ENCODE measurements at regions of chr7 and their contacts with region 1.

Region 1: DNA sequence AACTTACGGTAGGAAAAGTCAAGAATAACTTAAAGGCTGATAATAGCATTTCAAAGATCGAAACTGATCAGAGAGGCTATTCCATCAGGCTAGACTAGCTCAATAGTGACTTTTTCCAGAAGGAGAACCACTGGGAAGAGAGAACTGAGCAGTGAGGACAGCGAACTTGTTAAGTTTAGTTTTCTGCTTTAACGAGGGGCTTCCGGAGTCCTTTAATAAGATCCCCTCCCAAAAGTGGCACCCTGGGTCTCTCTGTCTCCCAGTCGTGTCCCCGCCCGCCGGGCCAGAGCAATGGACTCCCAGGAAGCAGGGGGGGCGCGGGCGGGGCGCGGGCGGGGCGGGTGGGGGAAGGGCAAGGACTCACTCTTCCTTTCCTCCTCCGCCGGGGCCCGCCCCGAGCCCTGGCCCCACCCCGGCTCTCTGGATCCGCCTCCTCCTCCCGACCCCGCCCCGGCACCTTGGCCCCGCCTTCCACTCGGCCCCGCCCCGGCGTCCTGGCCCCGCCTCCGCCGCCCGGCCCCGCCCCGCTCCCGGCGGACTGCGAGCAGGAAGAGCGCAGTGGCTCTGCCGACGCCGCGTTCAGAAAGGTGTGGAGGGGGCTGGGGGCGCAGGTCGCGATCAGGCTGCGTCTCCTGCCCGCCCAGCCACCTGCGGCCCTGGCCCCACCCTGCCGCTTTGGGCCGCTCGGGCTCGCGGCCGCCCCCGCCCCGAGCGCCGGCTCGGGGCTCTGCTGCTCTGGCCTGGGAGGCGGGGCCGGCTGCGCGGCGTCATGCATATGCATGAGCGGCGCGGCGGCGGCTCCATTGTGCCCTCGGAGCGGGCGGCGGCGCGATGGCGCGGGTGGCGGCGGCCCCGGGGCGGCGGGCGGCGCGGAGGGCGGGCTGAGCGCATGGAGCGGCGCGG is at the start of gene ZMIZ2:
- H3K4me3 Mint-ChIP-seq: peak within 1 kb of the TSS; percentile 91
- H3K27ac Mint-ChIP-seq: peak within 1 kb of the TSS; percentile 85
- H3K4me1 Mint-ChIP-seq: peaks cover 61% of the 10 kb centered on the region
- H3K27me3 Mint-ChIP-seq: no peaks in the 10 kb centered on the region

Region 2: GRCh38 chr7:44309471-44310049 is 438.7 kb before region 1 on chr7:
- intact Hi-C with region 1: no loop called
- H3K4me3 Mint-ChIP-seq: peak overlapping the region; percentile 32
- H3K27ac Mint-ChIP-seq: no peak overlapping the region
- H3K4me1 Mint-ChIP-seq: no peaks in the 10 kb centered on the region
- H3K27me3 Mint-ChIP-seq: peaks cover 54% of the 10 kb centered on the region

Region 3: DNA sequence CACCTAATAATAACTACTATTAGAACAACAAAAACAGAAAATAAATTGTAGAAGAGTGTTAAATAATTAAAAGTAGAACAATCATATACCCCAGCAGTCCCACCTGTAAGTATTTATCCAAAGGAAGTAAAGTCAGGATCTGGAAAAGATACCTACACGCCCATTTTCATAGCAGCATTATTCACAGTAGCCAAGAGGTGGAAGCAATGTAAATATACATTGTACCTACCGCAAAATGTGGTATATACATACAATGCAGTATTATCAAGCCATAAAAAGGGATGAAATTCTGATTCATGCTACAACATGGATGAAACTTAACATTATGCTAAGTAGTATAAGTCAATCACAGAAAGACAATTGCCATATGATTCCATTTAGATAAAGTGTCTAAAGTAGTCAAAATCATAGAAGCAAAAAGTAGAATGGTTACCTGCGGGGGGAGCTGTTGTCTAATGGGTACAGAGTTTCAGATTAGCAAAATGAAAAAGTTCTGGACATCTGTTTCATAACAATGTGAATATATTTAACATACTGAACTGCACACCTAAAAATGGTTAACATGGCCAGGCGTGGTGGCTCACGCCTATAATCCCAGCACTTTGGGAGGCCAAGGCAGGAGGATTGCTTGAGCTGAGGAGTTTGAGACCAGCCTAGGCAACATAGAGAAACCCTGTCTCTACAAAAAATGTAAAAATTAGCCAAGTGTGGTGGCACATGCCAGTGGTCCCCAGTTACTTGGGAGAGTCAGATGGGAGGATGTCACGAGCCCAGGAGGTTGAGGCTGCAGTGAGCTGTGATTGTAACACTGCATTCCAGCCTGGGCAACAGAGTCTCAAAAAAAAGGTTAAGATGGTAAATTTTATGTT is 160.2 kb before region 1 on chr7:
- intact Hi-C with region 1: loop called (anchors 5 kb)
- H3K4me3 Mint-ChIP-seq: no peak overlapping the region
- H3K27ac Mint-ChIP-seq: no peak overlapping the region
- H3K4me1 Mint-ChIP-seq: peaks cover 2% of the 10 kb centered on the region
- H3K27me3 Mint-ChIP-seq: peaks cover 8% of the 10 kb centered on the region

Region 4: DNA sequence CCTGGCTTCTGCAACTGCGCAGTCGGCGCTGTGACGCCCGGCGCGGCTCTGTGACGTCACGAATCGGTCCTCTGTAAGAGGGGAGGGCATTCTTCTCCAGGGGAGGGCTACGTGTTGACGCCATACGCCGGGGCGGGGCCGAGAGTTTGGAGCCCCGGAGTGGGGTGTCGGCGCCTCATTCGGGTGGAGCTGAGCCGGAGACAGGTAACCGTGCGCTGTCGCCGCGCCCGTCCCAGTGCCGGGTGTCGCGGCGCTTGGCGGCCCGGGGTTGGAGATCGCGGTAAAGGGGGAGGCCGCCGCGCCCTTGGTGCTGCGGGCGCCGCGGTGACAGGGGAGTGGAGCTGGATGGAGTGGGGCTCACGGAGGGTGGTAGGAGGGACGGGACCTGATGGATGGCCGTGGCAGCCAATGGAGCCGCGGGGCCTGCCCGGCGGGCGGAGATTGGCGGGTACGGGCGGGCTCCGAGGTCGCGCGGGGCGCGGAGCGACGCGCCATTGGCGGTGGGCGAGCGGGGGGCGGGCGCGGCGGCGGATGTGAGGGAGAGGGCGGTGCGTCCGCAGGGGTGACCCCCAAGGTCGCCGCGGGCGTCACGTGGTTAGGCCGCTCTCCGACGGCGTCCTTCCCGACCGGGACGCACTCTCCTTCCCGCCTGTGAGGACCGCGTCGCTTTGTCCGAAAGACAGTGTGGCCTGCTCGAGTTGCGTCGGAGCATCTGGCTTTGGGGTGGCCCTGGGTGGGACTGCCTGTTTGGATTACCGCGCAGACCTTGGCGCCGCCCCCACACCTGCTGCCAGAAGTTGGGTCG is 141.6 kb before region 1 on chr7 and contains the start of gene OGDH:
- intact Hi-C with region 1: loop called (anchors 2 kb)
- H3K4me3 Mint-ChIP-seq: peak within 1 kb of the TSS; percentile 94
- H3K27ac Mint-ChIP-seq: peak within 1 kb of the TSS; percentile 98
- H3K4me1 Mint-ChIP-seq: peaks cover 53% of the 10 kb centered on the region
- H3K27me3 Mint-ChIP-seq: peaks cover 11% of the 10 kb centered on the region

Region 5: DNA sequence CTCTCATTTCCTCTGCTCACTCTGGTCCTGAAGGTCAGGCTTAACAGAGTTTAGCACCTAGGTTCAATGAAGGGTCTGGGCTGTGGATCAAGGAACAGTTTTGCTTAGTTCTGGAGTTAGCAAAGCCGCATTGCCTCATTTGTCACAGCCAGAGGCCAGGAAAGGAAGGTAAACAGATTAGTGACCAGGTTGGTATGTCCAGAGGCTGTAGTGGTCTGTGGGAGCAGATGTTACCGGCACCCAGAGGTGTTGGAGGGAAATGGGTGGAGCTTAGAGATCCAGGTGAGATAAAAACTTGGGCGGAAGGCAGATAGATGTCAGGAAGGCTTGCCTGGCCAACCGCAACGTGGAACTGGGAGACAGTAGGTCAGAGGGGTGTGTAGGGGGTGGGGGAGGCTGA is 36.3 kb before region 1 on chr7:
- intact Hi-C with region 1: loop called (anchors 5 kb)
- H3K4me3 Mint-ChIP-seq: no peak overlapping the region
- H3K27ac Mint-ChIP-seq: no peak overlapping the region
- H3K4me1 Mint-ChIP-seq: peaks cover 29% of the 10 kb centered on the region
- H3K27me3 Mint-ChIP-seq: peaks cover 7% of the 10 kb centered on the region

Region 6: DNA sequence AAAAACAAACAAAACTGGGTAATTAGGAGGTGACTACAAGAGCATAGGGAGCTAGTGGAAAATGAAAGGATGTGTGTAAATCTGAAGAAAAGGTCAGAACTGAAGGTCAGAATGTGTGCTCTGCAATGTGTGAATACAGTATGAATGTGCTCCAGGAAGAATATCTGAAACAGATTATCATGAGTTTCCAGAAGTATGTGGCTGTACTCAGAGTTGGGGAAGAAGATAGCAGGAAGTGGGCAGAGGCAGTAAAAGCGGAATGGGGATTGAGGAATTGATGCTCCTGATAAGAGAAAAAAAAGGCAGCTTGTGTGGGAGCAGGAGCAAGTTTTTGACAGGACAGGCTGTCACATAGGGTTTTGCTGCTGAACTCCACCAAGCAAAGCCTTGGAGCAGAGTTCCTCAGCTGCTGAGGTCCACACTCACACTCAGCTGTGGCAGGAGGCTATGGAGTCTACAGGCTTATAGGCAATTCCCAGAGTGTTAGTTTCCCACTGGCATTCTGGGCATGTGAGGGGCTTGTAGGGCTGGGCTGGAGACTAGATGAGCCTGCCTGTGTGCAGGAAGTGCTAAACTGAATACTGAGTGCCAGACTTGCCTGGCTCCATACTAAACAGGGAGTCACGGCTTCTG is 76.7 kb after region 1 on chr7:
- intact Hi-C with region 1: no loop called
- H3K4me3 Mint-ChIP-seq: no peak overlapping the region
- H3K27ac Mint-ChIP-seq: peak overlapping the region; percentile 59
- H3K4me1 Mint-ChIP-seq: peaks cover 47% of the 10 kb centered on the region
- H3K27me3 Mint-ChIP-seq: no peaks in the 10 kb centered on the region

Region 7: GRCh38 chr7:44944821-44945220 is 196.5 kb after region 1 on chr7:
- intact Hi-C with region 1: no loop called
- H3K4me3 Mint-ChIP-seq: no peak overlapping the region
- H3K27ac Mint-ChIP-seq: no peak overlapping the region
- H3K4me1 Mint-ChIP-seq: no peaks in the 10 kb centered on the region
- H3K27me3 Mint-ChIP-seq: no peaks in the 10 kb centered on the region

Measured in dendritic cell treated with granulocyte-macrophage colony-stimulating factor and Interleukin-4, amounts not matched to agents 40 ng/mL and 50 ng/mL, for 4 days (primary cell).